Left cardiac atrium (tissue), 4 donors: ENCODE measurements at regions of chr1 and their contacts with region 1.

Region 1: GRCh38 chr1:116472431-116472961 is 98.3 kb downstream of the CD58 start:
- DNase-seq: no peak
- ATAC-seq: no peak

Region 2: GRCh38 chr1:116426401-116426800 is 46.1 kb before region 1 on chr1:
- intact Hi-C with region 1: loop called (anchors 5 to 10 kb)
- DNase-seq: no peak
- ATAC-seq: no peak

Region 3: GRCh38 chr1:116433275-116434257 is 38.9 kb before region 1 on chr1:
- intact Hi-C with region 1: loop called (anchors 5 to 10 kb)
- DNase-seq: peak; percentile 50
- ATAC-seq: peak; percentile 90 to 93